Ovary (tissue), 10 donors: ENCODE measurements at regions of chr5 and their contacts with region 1.

Region 1: GRCh38 chr5:107217721-107218130 is 453.0 kb downstream of the EFNA5 start:
- DNase-seq: no peak
- H3K4me3 ChIP-seq: no peak overlapping the region
- H3K27ac ChIP-seq: no peak overlapping the region
- H3K4me1 ChIP-seq: no peaks in the 10 kb centered on the region
- H3K27me3 ChIP-seq: no peaks in the 10 kb centered on the region
- CTCF ChIP-seq: no peak
- EP300 ChIP-seq: no peak
- POLR2A ChIP-seq: no peak

Region 2: GRCh38 chr5:107196500-107197059 is 21.1 kb before region 1 on chr5:
- intact Hi-C with region 1: loop called in 1 of 4 experiments (anchors 1 kb)
- DNase-seq: no peak
- H3K4me3 ChIP-seq: no peak overlapping the region
- H3K27ac ChIP-seq: no peak overlapping the region
- H3K4me1 ChIP-seq: no peaks in the 10 kb centered on the region
- H3K27me3 ChIP-seq: no peaks in the 10 kb centered on the region
- CTCF ChIP-seq: no peak
- EP300 ChIP-seq: no peak
- POLR2A ChIP-seq: no peak